Psoas muscle (tissue), 8 donors: ENCODE measurements at regions of chr11 and their contacts with region 1.

Region 1: GRCh38 chr11:15720460-15720859 is 605.7 kb downstream of the INSC start:
- DNase-seq: no peak
- ATAC-seq: peak; percentile 59 to 86 (median 73)
- H3K4me3 ChIP-seq: no peak overlapping the region
- H3K27ac ChIP-seq: no peak overlapping the region
- H3K4me1 ChIP-seq: no peaks in the 10 kb centered on the region
- H3K27me3 ChIP-seq: no peaks in the 10 kb centered on the region
- CTCF ChIP-seq: no peak

Region 2: GRCh38 chr11:15704064-15704463 is 16.4 kb before region 1 on chr11:
- intact Hi-C with region 1: loop called in 1 of 2 experiments (anchors 2 kb)
- DNase-seq: no peak
- ATAC-seq: no peak
- H3K4me3 ChIP-seq: no peak overlapping the region
- H3K27ac ChIP-seq: no peak overlapping the region
- H3K4me1 ChIP-seq: peaks cover 14% of the 10 kb centered on the region
- H3K27me3 ChIP-seq: no peaks in the 10 kb centered on the region
- CTCF ChIP-seq: no peak